T-cell (primary cell): ENCODE measurements at regions of chr6 and their contacts with region 1.

Region 1: GRCh38 chr6:37850728-37851285 is 31.3 kb downstream of the ZFAND3 start:
- DNase-seq: no peak
- ATAC-seq: no peak
- H3K4me3 ChIP-seq: no peak overlapping the region
- H3K4me3 Mint-ChIP-seq: no peak overlapping the region
- H3K27ac ChIP-seq: no peak overlapping the region
- H3K27ac Mint-ChIP-seq: no peak overlapping the region
- H3K4me1 ChIP-seq: peaks cover 0 to 8% of the 10 kb centered on the region in 2 experiments
- H3K4me1 Mint-ChIP-seq: peaks cover 65 to 73% (median 71%) of the 10 kb centered on the region in 3 donors
- H3K27me3 ChIP-seq: no peaks in the 10 kb centered on the region
- H3K27me3 Mint-ChIP-seq: no peaks in the 10 kb centered on the region

Region 2: DNA sequence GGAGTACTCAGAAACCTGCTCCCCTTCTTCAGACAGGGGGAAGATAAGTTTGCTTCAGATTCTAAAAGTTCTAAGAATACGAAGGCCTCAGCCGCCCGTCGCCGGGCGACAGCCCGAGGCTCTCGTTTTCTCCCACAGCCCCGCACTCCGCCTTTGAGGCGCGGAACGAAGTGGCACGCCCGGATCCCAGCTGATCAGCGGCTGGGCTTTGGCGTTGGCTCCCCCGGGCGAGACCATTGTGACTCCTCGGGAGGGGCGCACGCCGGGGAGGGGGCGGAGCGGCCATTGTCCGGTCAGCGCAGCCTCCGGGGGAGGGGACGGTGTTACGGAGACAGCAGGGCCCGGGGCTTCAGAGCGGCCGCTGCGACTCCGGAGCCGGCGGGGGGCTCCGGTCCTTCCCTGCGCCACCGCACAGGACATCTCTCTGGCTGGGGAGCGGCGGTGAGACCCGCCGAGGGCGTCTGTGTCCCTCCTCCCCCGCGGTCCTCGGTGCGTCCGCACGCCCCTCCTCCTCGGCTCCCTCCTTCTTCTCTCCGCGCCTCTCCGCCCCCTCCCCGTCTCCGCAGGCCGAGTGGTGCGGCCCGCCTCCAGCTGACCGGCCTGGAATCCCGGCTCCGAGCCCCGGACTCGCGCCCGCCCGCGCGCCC is 31.5 kb before region 1 on chr6 and contains the start of gene ZFAND3:
- CTCF ChIA-PET with region 1: interaction called in 1 of 2 experiments, 3 read pairs
- POLR2A ChIA-PET with region 1: interaction called, 3 to 10 read pairs
- DNase-seq: peak in 34 of 35 experiments; percentile 78 to 97 (median 87)
- ATAC-seq: peak; percentile 83 to 85 (median 84)
- H3K4me3 ChIP-seq: peak within 1 kb of the TSS; percentile 87 to 98
- H3K4me3 Mint-ChIP-seq: peak within 1 kb of the TSS; percentile 94 to 99 (median 98)
- H3K27ac ChIP-seq: peak within 1 kb of the TSS; percentile 97
- H3K27ac Mint-ChIP-seq: peak within 1 kb of the TSS; percentile 99
- H3K4me1 ChIP-seq: peaks cover 18 to 30% of the 10 kb centered on the region in 2 experiments
- H3K4me1 Mint-ChIP-seq: peaks cover 58 to 62% (median 59%) of the 10 kb centered on the region in 3 donors
- H3K27me3 ChIP-seq: no peaks in the 10 kb centered on the region
- H3K27me3 Mint-ChIP-seq: no peaks in the 10 kb centered on the region
- total RNA-seq, gene ZFAND3: 35.6 to 59.3 (median 36.4) TPM

Region 3: DNA sequence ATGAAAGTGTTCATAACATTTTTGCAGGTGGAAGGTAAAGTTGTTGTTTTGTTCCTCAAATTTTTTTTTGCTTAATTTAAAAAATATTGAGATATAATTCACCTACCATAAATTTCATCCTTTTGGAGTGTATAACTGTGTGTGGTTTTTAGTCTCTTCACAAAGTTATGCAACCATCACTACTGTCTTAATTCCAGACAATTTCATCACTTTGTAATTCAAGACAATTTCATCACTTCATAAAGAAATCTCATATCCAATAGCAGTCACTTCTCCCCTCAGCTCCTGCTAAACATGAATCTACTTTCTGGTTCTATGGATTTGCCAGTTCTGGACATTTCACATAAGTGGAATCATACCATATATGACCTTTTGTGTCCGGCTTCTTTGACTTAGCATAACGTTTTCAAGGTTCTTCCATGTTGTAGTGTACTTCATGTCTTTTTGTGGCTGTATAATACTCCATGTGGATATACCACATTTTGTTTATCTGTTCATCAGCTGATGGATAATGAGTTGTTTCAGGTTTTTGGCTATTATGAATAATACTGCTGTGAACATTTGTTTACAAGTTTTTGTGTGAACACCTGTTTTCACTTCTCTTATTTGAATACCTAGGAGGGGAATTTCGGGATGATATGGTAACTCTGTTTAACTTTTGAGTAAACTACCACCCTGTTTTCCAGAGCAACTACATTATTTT is 12.4 kb before region 1 on chr6:
- CTCF ChIA-PET with region 1: no interaction called
- POLR2A ChIA-PET with region 1: no interaction called
- DNase-seq: no peak
- ATAC-seq: no peak
- H3K4me3 ChIP-seq: no peak overlapping the region
- H3K4me3 Mint-ChIP-seq: no peak overlapping the region
- H3K27ac ChIP-seq: no peak overlapping the region
- H3K27ac Mint-ChIP-seq: no peak overlapping the region
- H3K4me1 ChIP-seq: peaks cover under 1 to 6% of the 10 kb centered on the region in 2 experiments
- H3K4me1 Mint-ChIP-seq: peaks cover 59 to 63% (median 61%) of the 10 kb centered on the region in 3 donors
- H3K27me3 ChIP-seq: no peaks in the 10 kb centered on the region
- H3K27me3 Mint-ChIP-seq: no peaks in the 10 kb centered on the region